ENCODE measurements at regions of chr6 and their contacts with region 1.

Region 1: DNA sequence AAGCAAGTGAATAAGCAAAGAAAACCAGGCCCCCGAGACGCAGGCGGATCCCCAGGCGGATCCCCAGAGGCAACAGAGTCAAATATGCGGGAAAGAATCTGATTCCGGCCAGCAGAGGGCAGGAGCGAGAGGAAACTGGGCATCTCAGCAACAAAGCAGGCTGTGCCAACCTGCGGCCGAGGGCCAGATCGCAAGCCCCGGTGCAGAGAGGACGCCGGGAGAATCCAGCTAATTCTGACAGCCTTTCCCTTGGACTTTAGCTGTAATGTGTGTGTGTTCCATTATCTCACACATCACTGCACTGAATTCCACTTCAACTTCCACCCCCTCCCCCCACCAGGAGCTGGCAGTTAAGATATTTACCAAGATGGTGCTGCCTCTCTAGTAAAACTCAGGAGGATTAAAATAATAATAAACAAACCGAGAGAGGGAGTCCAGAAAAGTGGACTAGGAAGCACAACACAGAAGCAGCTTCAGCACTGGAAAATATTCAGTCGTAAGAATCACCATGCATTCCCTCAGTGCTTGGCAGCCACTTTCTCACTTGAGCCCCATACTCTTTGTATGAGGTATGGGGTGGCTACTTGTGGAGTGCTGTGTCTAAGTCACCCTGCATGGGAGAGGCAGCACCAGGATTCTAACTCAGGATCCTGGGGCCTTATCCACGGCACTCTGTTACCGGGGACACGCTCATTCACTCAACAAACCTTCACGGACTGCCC is 66.2 kb upstream of the SNX9 start:
- DNase-seq: peak; percentile 85 to 91 (median 87)
- ATAC-seq: peak; percentile 93 to 98 (median 96)
- H3K4me3 ChIP-seq: no peak overlapping the region
- H3K27ac ChIP-seq: peak overlapping the region in 1 of 3 donors; percentile 20
- H3K4me1 ChIP-seq: no peaks in the 10 kb centered on the region
- H3K27me3 ChIP-seq: no peaks in the 10 kb centered on the region
- CTCF ChIP-seq: peak; percentile 75 to 83 (median 78)
- POLR2A ChIP-seq: no peak

Region 2: GRCh38 chr6:157034436-157035230 is 722.2 kb before region 1 on chr6:
- intact Hi-C with region 1: no loop called
- DNase-seq: no peak
- ATAC-seq: peak; percentile 80 to 84 (median 84)
- H3K4me3 ChIP-seq: no peak overlapping the region
- H3K27ac ChIP-seq: peak overlapping the region in 2 of 3 donors; percentile 62 to 73
- H3K4me1 ChIP-seq: peaks cover 0 to 15% (median 6%) of the 10 kb centered on the region in 4 donors
- H3K27me3 ChIP-seq: no peaks in the 10 kb centered on the region
- CTCF ChIP-seq: peak; percentile 64 to 69 (median 66)
- POLR2A ChIP-seq: no peak

Region 3: GRCh38 chr6:157873735-157874344 is 117.0 kb after region 1 on chr6:
- intact Hi-C with region 1: loop called (anchors 5 to 10 kb)
- DNase-seq: peak; percentile 75 to 81 (median 81)
- ATAC-seq: peak; percentile 79 to 91 (median 82)
- H3K4me3 ChIP-seq: no peak overlapping the region
- H3K27ac ChIP-seq: no peak overlapping the region
- H3K4me1 ChIP-seq: no peaks in the 10 kb centered on the region
- H3K27me3 ChIP-seq: no peaks in the 10 kb centered on the region
- CTCF ChIP-seq: peak; percentile 64 to 91 (median 83)
- POLR2A ChIP-seq: no peak